ENCODE measurements at regions of chr4 and their contacts with region 1.

Region 1: GRCh38 chr4:41418444-41418843 is 119.5 kb upstream of the LIMCH1 start:
- DNase-seq: peak; percentile 74
- ATAC-seq: peak; percentile 79 to 93

Region 2: DNA sequence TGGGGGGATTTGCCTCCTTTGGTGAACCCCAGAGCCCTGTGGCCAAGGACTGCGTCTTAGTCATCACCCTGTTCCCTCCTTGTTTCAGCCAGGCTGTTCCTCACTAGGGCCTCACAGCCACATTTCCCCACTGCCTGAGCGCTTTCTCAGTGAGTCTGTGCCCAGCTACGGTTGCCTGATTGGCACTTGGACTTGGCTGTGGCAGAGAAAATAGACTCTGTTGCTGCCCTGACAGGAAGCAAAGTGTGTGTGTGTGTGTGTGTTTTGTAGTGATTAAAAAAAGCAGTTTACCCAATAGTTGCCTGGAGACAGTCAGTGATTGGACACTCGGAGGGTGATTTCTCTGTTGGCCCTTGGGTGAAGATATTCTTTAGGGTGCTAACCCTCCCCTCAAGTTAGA is 48.7 kb before region 1 on chr4:
- intact Hi-C with region 1: loop called in 1 of 2 experiments (anchors 2 kb)
- DNase-seq: peak; percentile 52
- ATAC-seq: peak; percentile 85 to 91

Region 3: GRCh38 chr4:41757521-41758156 is 339.2 kb after region 1 on chr4:
- intact Hi-C with region 1: no loop called
- DNase-seq: no peak
- ATAC-seq: no peak

Measured in left cardiac atrium (tissue), 4 donors.